PC-9 (cell line): ENCODE measurements at regions of chr3 and their contacts with region 1.

Region 1: GRCh38 chr3:177441813-177442646 is 244.7 kb upstream of the TBL1XR1 start:
- DNase-seq: no peak
- H3K4me3 ChIP-seq: no peak overlapping the region
- H3K27ac ChIP-seq: no peak overlapping the region
- H3K4me1 ChIP-seq: peaks cover 21% of the 10 kb centered on the region
- H3K27me3 ChIP-seq: no peaks in the 10 kb centered on the region
- CTCF ChIP-seq: no peak

Region 2: GRCh38 chr3:177371888-177372287 is 70.1 kb before region 1 on chr3:
- CTCF ChIA-PET with region 1: no interaction called
- POLR2A ChIA-PET with region 1: no interaction called
- intact Hi-C with region 1: no loop called
- DNase-seq: no peak
- H3K4me3 ChIP-seq: no peak overlapping the region
- H3K27ac ChIP-seq: no peak overlapping the region
- H3K4me1 ChIP-seq: no peaks in the 10 kb centered on the region
- H3K27me3 ChIP-seq: no peaks in the 10 kb centered on the region
- CTCF ChIP-seq: no peak

Region 3: DNA sequence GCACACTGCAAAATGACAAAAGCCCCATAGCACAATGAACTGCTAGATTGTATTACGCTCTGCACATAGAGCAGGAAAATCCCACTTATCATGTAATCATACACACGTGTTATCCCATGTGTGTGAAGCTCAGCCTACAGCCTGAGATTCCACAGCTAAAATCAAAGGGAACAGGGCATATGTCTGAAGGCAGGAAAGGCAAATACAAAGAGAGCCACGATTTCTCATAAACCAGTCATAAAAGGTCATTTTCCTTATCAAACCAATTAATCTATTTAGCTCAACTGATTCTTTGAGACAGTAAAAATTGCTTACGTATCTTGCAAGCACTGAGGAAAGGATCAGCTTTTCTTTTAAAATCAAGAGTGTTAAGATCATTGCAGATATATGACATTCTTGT is 45.3 kb before region 1 on chr3:
- CTCF ChIA-PET with region 1: no interaction called
- POLR2A ChIA-PET with region 1: no interaction called
- intact Hi-C with region 1: loop called (anchors 5 kb)
- DNase-seq: no peak
- H3K4me3 ChIP-seq: no peak overlapping the region
- H3K27ac ChIP-seq: no peak overlapping the region
- H3K4me1 ChIP-seq: peaks cover 14% of the 10 kb centered on the region
- H3K27me3 ChIP-seq: no peaks in the 10 kb centered on the region
- CTCF ChIP-seq: no peak

Region 4: DNA sequence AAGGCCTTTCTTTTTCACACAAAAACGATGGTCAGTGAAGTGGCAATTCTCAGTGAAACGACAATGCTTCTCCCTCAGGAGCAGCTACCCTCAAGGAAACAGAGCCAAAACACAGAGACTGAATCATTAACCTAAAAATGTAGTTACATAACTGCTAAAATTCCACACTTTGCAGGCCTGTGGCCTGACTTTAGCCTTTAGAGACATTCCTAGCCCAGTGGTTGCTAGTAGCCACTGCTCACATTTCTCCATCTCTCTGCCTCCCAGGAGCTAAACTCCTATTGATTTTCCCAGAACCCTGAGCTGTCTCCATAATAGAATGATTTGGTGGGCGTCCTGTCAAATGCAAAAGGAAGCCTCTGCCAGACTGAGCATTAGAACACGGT is 464.1 kb after region 1 on chr3:
- CTCF ChIA-PET with region 1: no interaction called
- POLR2A ChIA-PET with region 1: no interaction called
- intact Hi-C with region 1: loop called (anchors 5 kb)
- DNase-seq: peak; percentile 26 to 67
- H3K4me3 ChIP-seq: no peak overlapping the region
- H3K27ac ChIP-seq: 0 out of 2 replicates have a peak overlapping the region, but pooled peaks have one; percentile 16
- H3K4me1 ChIP-seq: peaks cover 14% of the 10 kb centered on the region
- H3K27me3 ChIP-seq: no peaks in the 10 kb centered on the region
- CTCF ChIP-seq: no peak